Activated CD4-positive, alpha-beta memory T cell treated with anti-CD3 and anti-CD28 coated beads, Interleukin-2, amount 10 ng/mL, durations not matched to agents 7 days and 5 days (primary cell): ENCODE measurements at regions of chr1 and their contacts with region 1.

Region 1: GRCh38 chr1:8015036-8015808 is 10.9 kb downstream of the ERRFI1 start:
- DNase-seq: peak; percentile 31
- H3K4me3 Mint-ChIP-seq: no peak overlapping the region
- H3K27ac Mint-ChIP-seq: no peak overlapping the region
- H3K4me1 Mint-ChIP-seq: no peaks in the 10 kb centered on the region
- H3K27me3 Mint-ChIP-seq: peaks cover 16% of the 10 kb centered on the region

Region 2: DNA sequence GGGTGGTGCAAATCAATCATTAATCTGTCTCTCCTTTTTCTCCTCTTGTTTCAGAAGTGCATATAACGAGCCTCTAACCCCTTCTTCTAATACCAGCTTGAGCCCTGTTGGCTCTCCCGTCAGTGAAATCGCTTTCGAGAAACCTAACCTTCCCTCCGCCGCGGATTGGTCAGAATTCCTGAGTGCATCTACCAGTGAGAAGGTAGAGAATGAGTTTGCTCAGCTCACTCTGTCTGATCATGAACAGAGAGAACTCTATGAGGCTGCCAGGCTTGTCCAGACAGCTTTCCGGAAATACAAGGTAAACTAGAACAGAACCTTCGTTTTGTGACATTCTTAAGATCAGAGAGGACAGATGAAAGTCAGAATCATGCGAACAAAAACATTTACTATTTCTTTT is 269.4 kb before region 1 on chr1:
- CTCF ChIA-PET with region 1: no interaction called
- POLR2A ChIA-PET with region 1: no interaction called
- DNase-seq: no peak
- H3K4me3 Mint-ChIP-seq: no peak overlapping the region
- H3K27ac Mint-ChIP-seq: no peak overlapping the region
- H3K4me1 Mint-ChIP-seq: peaks cover 9% of the 10 kb centered on the region
- H3K27me3 Mint-ChIP-seq: peaks cover 5% of the 10 kb centered on the region

Region 3: DNA sequence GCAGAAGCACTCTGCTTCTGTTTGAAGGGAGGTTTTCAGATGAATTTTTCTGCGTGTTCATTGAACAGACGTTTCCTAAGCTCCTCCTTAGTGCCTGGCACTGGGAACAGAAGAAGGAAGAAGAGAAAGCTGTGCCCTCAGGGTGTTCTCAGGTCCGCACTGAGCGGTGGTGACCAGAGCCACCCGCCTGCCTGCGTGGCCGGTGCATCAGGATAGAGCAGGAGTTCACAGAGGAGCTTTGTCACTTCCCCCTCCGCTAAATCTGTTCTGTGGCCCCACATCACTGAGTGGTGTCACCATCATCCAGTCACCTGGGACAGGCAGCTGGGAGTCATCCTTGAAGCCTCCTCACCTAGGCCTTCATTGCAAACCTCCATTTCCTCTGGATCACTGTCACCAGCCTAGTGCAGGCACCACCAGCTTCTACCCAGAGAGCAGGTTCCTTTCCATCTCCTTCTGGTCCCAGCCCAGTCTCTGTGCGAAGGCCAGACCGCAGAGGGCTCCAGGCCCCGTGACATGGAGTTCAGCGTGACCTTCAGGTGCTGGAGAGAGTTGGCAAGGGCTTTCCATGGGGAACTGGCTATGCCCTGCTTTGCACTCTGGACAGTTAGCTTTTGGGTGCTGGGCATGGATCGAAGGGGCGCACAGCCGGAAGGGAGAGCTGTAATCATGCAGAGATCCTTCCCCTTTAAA is 32.0 kb before region 1 on chr1:
- CTCF ChIA-PET with region 1: interaction called, 14 read pairs
- POLR2A ChIA-PET with region 1: no interaction called
- DNase-seq: no peak
- H3K4me3 Mint-ChIP-seq: no peak overlapping the region
- H3K27ac Mint-ChIP-seq: no peak overlapping the region
- H3K4me1 Mint-ChIP-seq: peaks cover 15% of the 10 kb centered on the region
- H3K27me3 Mint-ChIP-seq: no peaks in the 10 kb centered on the region

Region 4: GRCh38 chr1:8070381-8070811 is 55.2 kb after region 1 on chr1:
- CTCF ChIA-PET with region 1: no interaction called
- POLR2A ChIA-PET with region 1: no interaction called
- DNase-seq: no peak
- H3K4me3 Mint-ChIP-seq: no peak overlapping the region
- H3K27ac Mint-ChIP-seq: no peak overlapping the region
- H3K4me1 Mint-ChIP-seq: no peaks in the 10 kb centered on the region
- H3K27me3 Mint-ChIP-seq: peaks cover 3% of the 10 kb centered on the region

Region 5: GRCh38 chr1:8197493-8198282 is 182.5 kb after region 1 on chr1:
- CTCF ChIA-PET with region 1: no interaction called
- POLR2A ChIA-PET with region 1: no interaction called
- DNase-seq: no peak
- H3K4me3 Mint-ChIP-seq: no peak overlapping the region
- H3K27ac Mint-ChIP-seq: no peak overlapping the region
- H3K4me1 Mint-ChIP-seq: peaks cover 18% of the 10 kb centered on the region
- H3K27me3 Mint-ChIP-seq: peaks cover 6% of the 10 kb centered on the region

Region 6: DNA sequence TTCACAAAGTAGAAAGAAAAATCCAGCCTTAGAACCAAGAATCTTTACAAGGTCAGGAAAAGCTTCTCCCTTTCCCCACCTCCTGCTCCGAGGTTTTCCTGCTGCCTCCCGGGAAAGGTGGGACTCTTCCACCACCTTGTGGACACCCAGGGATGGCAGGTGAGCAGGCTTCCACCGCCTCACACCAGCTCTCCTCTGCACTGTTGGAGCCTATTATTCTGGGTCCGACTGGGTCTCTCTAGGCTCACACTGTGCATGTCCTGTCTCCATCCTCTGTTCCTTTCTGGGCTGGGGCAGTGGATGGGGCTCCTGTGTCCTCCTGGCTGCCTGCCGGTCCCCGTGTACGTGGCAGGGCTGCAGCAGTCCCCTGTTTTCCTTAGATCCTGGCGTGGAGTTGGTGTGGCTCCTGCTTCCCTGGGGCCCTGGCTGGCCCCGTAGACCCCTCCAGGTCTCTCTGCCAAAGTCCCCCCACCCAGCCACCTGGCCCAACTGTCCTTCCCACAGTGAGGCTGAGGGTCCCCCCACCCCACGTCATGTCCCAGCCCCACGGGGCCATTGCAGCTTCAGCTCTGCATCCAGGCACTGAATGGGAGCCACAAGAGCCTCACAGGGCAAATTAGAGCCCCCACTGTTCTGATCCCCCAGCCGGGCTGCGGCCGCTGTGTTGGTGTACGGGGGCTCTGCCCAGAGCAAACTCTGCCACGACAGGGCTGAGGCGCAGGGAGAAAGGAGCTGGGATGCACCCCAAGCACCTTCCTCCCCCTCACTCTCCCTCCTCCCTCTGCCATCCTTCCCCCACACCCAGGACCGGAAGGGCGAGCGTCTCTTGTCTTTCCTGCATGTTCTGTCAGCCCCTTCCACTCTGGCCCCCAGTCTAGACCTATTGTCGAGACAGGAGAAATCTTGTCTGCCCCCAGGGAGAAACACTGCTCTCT is 299.4 kb after region 1 on chr1:
- CTCF ChIA-PET with region 1: interaction called, 52 read pairs
- POLR2A ChIA-PET with region 1: interaction called, 6 read pairs
- DNase-seq: peak; percentile 56
- H3K4me3 Mint-ChIP-seq: no peak overlapping the region
- H3K27ac Mint-ChIP-seq: no peak overlapping the region
- H3K4me1 Mint-ChIP-seq: peaks cover 21% of the 10 kb centered on the region
- H3K27me3 Mint-ChIP-seq: peaks cover 33% of the 10 kb centered on the region

Region 7: DNA sequence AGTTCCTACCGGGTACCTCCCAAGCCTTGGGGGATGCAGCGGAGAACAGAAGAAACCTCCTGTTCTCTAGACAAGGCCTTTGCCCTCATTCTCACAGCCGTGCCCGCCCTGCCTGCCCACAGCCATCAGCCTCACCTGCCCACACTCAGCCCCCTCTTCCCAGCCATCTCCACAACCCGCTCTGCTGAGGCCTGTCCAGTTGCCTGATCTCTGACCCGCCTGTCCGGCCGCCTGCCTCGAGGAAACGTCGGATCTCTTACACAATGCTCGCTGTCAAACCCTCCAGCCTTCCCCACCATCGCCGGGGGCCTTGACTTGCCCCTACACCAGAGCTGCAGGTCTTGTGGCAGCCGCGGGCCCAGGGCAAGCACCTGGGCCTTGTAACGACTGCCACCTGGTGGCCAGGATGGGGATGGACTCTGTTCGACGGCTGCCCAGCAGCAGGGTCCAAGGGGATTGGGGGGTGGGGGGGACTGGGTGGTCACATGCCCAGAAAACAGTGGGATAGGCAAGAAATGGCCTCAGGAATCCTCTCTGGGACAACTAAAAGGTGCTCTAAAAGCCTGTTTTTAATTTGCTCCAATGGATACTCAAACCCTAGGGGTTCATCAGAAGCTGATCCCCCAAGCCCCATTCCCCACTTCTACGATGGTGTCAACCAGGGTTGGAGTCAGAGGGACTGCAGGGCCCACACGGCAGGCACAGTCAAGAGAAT is 333.7 kb after region 1 on chr1:
- CTCF ChIA-PET with region 1: interaction called, 61 read pairs
- POLR2A ChIA-PET with region 1: interaction called, 3 read pairs
- DNase-seq: peak; percentile 70
- H3K4me3 Mint-ChIP-seq: no peak overlapping the region
- H3K27ac Mint-ChIP-seq: no peak overlapping the region
- H3K4me1 Mint-ChIP-seq: no peaks in the 10 kb centered on the region
- H3K27me3 Mint-ChIP-seq: no peaks in the 10 kb centered on the region